Dorsolateral prefrontal cortex (tissue), 120 donors: ENCODE measurements at regions of chr16 and their contacts with region 1.

Region 1: GRCh38 chr16:28863929-28864793 is 518 bp downstream of the SH2B1 start:
- DNase-seq: peak in 1 of 10 donors; percentile 23
- H3K4me3 ChIP-seq: peak overlapping the region; percentile 66 to 98 (median 92)
- H3K27ac ChIP-seq: peak overlapping the region in 57 of 59 donors; percentile 72 to 99 (median 96)
- H3K27me3 ChIP-seq: no peaks in the 10 kb centered on the region
- CTCF ChIP-seq: no peak

Region 2: GRCh38 chr16:28835867-28836744 is 28.1 kb before region 1 on chr16:
- intact Hi-C with region 1: no loop called
- DNase-seq: no peak
- H3K4me3 ChIP-seq: no peak overlapping the region
- H3K27ac ChIP-seq: no peak overlapping the region
- H3K27me3 ChIP-seq: no peaks in the 10 kb centered on the region
- CTCF ChIP-seq: no peak

Region 3: GRCh38 chr16:28924732-28925385 is 60.7 kb after region 1 on chr16 and contains the start of gene RABEP2:
- intact Hi-C with region 1: loop called in 1 of 2 experiments (anchors 5 kb)
- DNase-seq: peak; percentile 81 to 93 (median 88)
- H3K4me3 ChIP-seq: peak within 1 kb of the TSS; percentile 58 to 99 (median 89)
- H3K27ac ChIP-seq: peak within 1 kb of the TSS; percentile 74 to 98 (median 95)
- H3K27me3 ChIP-seq: no peaks in the 10 kb centered on the region
- CTCF ChIP-seq: peak in 5 of 56 donors; percentile 4 to 52 (median 22)
- total RNA-seq, gene RABEP2: 9.1 to 24.2 (median 15.8) TPM

Region 4: DNA sequence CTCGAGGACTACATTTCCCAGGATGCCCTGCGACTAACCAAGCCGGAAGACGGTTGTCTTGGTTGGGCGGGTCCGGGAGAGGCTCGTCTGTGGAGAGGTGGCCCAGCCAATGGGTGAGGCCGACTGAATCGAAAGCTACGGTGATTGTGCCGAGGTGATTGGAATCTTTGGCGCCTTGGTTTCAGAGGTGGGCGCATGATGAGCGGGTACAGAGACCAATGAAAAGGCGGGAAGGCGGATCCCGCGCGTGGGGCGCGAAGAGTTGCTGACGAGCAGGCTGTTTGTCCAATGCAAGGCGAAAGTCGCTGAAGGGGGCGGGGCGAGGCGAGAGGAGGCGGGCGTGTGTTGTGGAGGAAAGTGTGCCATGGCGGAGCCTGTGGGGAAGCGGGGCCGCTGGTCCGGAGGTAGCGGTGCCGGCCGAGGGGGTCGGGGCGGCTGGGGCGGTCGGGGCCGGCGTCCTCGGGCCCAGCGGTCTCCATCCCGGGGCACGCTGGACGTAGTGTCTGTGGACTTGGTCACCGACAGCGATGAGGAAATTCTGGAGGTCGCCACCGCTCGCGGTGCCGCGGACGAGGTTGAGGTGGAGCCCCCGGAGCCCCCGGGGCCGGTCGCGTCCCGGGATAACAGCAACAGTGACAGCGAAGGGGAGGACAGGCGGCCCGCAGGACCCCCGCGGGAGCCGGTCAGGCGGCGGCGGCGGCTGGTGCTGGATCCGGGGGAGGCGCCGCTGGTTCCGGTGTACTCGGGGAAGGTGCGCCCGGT is 86.7 kb after region 1 on chr16 and contains the start of gene NFATC2IP:
- intact Hi-C with region 1: loop called (anchors 1 kb)
- DNase-seq: peak; percentile 100
- H3K4me3 ChIP-seq: peak within 1 kb of the TSS; percentile 70 to 100 (median 96)
- H3K27ac ChIP-seq: peak within 1 kb of the TSS; percentile 1 to 93 (median 81)
- H3K27me3 ChIP-seq: no peaks in the 10 kb centered on the region
- CTCF ChIP-seq: peak in 17 of 56 donors; percentile 5 to 53 (median 22)
- total RNA-seq, gene NFATC2IP: 23.5 to 52.5 (median 35.3) TPM